ENCODE measurements at regions of chr4 and their contacts with region 1.

Region 1: GRCh38 chr4:174522183-174523048 is at the start of gene HPGD:
- DNase-seq: no peak
- ATAC-seq: peak; percentile 21; the same call in 1 of the 2 replicates
- H3K4me3 ChIP-seq: peak within 1 kb of the TSS; percentile 31; the same call in 1 of the 2 replicates
- H3K27ac ChIP-seq: no peak within 1 kb of the TSS
- H3K4me1 ChIP-seq: no peaks in the 10 kb centered on the region
- H3K27me3 ChIP-seq: peaks cover 18% of the 10 kb centered on the region
- CTCF ChIP-seq: no peak
- POLR2A ChIP-seq: no peak
- RAD21 ChIP-seq: no peak
- total RNA-seq, gene HPGD: not detected in 2 replicates

Region 2: DNA sequence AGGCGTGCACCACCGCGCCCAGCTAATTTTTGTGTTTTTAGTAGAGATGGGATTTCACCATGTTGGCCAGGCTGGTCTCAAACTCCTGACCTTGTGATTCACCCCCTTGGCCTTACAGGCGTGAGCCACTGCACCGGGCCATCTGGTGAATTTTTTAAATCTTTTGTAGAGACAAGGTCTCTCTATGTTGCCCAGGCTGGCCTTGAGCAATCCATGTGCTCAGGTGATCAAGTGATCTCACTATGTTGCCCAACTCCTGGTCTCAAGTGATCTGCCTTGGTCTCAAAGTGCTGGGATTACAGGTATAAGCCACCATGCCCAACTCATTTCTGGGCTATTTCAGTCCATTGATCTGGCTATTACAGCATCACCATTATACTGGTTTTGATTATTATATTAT is 1376.0 kb before region 1 on chr4:
- CTCF ChIA-PET with region 1: no interaction called
- POLR2A ChIA-PET with region 1: no interaction called
- dilution Hi-C with region 1: no loop called
- in situ Hi-C with region 1: no loop called
- intact Hi-C with region 1: loop called (anchors 10 kb)
- DNase-seq: no peak
- ATAC-seq: no peak
- H3K4me3 ChIP-seq: no peak overlapping the region
- H3K27ac ChIP-seq: no peak overlapping the region
- H3K4me1 ChIP-seq: no peaks in the 10 kb centered on the region
- H3K27me3 ChIP-seq: no peaks in the 10 kb centered on the region
- CTCF ChIP-seq: no peak
- POLR2A ChIP-seq: no peak
- RAD21 ChIP-seq: no peak

Region 3: DNA sequence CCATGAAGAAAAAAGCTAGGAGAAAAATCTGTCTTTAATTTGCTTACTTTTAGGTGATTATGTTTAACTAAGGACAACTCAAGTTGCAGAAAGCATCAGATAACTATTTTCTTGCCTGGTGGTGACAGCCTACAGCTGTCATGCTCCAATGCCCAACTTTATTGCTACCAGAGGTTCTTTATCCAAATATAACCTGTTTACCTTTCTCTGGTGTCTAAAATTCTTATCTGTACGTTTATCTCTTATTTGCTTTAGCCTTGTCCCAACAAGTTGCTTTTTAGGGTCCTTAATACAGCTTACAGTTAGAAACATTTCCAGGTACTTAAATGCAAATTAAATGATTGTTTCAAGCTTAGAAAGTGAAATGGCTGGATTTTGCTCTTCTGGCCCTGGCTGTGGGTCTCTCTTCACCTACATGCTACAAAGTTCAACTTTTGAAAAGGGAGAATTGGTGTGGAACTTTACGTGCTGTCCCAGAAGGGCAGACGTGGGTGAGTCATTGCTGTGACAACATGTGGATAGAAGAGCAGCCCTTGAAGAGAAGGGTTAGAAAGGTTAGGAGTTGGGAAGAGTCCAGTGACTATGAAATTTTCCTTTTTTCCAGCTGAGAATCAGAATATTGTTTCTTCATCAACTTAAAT is 60.8 kb before region 1 on chr4:
- CTCF ChIA-PET with region 1: no interaction called
- POLR2A ChIA-PET with region 1: no interaction called
- dilution Hi-C with region 1: no loop called
- in situ Hi-C with region 1: no loop called
- intact Hi-C with region 1: no loop called
- DNase-seq: no peak
- ATAC-seq: no peak
- H3K4me3 ChIP-seq: no peak overlapping the region
- H3K27ac ChIP-seq: no peak overlapping the region
- H3K4me1 ChIP-seq: no peaks in the 10 kb centered on the region
- H3K27me3 ChIP-seq: no peaks in the 10 kb centered on the region
- CTCF ChIP-seq: no peak
- POLR2A ChIP-seq: no peak
- RAD21 ChIP-seq: no peak

Region 4: GRCh38 chr4:174549721-174550120 is 27.3 kb after region 1 on chr4:
- CTCF ChIA-PET with region 1: no interaction called
- POLR2A ChIA-PET with region 1: no interaction called
- dilution Hi-C with region 1: no loop called
- in situ Hi-C with region 1: no loop called
- intact Hi-C with region 1: no loop called
- DNase-seq: no peak
- ATAC-seq: no peak
- H3K4me3 ChIP-seq: no peak overlapping the region
- H3K27ac ChIP-seq: no peak overlapping the region
- H3K4me1 ChIP-seq: no peaks in the 10 kb centered on the region
- H3K27me3 ChIP-seq: no peaks in the 10 kb centered on the region
- CTCF ChIP-seq: no peak
- POLR2A ChIP-seq: no peak
- RAD21 ChIP-seq: no peak

Region 5: DNA sequence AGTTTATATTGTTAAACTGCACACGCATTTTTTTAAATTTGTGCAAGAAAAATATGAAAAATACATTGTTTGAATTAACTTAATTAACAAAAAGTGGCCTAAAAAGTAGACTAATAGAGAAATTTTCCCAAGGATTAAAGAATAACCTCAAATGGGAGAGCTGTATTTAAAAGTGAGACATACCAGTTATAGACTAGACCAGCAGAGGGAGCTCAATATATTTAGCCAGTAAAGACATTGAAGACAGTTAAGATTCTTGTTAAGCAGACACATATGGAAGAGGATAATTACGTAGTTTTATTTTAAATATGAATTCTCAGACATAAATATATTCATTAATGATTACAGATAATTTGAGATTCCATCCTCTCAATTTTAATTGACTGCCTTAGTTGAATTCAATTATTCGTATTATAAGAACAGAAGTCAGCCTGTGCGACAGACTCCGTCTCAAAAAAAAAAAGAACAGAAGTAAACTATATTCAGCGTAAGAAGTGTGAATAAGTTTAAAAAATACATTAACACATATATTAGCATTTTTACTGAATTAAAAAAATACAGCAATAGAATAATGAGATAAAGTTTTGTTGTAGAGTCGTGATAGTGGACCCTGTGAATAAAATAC is 241.8 kb after region 1 on chr4:
- CTCF ChIA-PET with region 1: no interaction called
- POLR2A ChIA-PET with region 1: no interaction called
- dilution Hi-C with region 1: no loop called
- in situ Hi-C with region 1: no loop called
- intact Hi-C with region 1: no loop called
- DNase-seq: peak; percentile 40
- ATAC-seq: no peak
- H3K4me3 ChIP-seq: no peak overlapping the region
- H3K27ac ChIP-seq: no peak overlapping the region
- H3K4me1 ChIP-seq: no peaks in the 10 kb centered on the region
- H3K27me3 ChIP-seq: no peaks in the 10 kb centered on the region
- CTCF ChIP-seq: peak; percentile 61
- POLR2A ChIP-seq: no peak
- RAD21 ChIP-seq: peak; percentile 52